Dorsolateral prefrontal cortex (tissue), 120 donors: ENCODE measurements at regions of chr1 and their contacts with region 1.

Region 1: DNA sequence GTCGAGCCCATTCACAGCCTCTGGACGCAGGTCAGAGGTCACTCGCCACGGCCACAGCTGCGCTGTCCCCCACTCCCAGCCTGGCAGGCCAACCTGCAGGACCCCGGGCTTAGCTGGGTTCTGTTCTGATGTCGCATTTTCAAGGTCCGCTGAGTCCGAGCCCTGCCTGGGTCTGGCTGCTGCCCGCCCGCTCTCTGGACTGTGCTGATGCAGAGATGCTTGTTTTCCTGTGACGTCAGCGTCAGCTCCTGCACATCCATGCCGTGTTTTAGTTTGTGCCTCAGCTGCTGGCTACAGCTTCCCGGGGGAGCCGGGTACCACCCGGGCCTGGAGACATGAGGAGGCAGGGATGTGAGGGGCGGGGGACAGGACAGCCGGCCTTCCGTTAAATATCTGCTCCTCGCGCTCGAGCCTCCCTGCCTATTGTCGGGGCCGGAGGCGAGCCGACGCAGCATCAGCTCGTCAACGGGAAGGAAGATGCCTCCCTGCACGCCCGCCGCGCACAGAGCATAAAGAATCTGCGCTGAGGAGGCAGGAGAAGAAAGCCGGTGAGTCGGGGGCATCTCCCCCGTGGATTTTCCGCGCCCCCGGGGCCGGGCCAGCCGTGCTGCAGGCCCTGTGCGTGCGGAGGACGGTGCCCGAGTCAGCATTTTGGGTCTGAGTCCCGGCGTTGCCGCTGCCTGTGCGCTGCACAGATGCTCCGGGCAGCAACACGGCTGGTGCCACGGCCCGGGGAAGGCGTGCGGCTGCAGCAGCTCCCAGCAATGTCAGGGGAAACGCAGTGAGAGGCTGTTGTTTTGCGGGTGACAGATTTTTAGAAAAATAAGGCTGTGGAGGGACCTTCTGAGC is 23.4 kb downstream of the PRKCZ start:
- DNase-seq: peak; percentile 75 to 95 (median 92)
- H3K4me3 ChIP-seq: peak overlapping the region; percentile 56 to 93 (median 81)
- H3K27ac ChIP-seq: peak overlapping the region; percentile 58 to 97 (median 91)
- H3K27me3 ChIP-seq: peaks cover 0 to 5% (median 0%) of the 10 kb centered on the region in 45 donors
- CTCF ChIP-seq: peak in 3 of 56 donors; percentile 12 to 15 (median 13)

Region 2: GRCh38 chr1:1919304-1920056 is 154.1 kb before region 1 on chr1:
- intact Hi-C with region 1: no loop called
- DNase-seq: peak; percentile 85 to 93 (median 90)
- H3K4me3 ChIP-seq: peak overlapping the region; percentile 15 to 72 (median 59)
- H3K27ac ChIP-seq: peak overlapping the region in 15 of 59 donors; percentile 10 to 73 (median 49)
- H3K27me3 ChIP-seq: no peaks in the 10 kb centered on the region
- CTCF ChIP-seq: peak in 3 of 56 donors; percentile 6 to 38 (median 12)

Region 3: DNA sequence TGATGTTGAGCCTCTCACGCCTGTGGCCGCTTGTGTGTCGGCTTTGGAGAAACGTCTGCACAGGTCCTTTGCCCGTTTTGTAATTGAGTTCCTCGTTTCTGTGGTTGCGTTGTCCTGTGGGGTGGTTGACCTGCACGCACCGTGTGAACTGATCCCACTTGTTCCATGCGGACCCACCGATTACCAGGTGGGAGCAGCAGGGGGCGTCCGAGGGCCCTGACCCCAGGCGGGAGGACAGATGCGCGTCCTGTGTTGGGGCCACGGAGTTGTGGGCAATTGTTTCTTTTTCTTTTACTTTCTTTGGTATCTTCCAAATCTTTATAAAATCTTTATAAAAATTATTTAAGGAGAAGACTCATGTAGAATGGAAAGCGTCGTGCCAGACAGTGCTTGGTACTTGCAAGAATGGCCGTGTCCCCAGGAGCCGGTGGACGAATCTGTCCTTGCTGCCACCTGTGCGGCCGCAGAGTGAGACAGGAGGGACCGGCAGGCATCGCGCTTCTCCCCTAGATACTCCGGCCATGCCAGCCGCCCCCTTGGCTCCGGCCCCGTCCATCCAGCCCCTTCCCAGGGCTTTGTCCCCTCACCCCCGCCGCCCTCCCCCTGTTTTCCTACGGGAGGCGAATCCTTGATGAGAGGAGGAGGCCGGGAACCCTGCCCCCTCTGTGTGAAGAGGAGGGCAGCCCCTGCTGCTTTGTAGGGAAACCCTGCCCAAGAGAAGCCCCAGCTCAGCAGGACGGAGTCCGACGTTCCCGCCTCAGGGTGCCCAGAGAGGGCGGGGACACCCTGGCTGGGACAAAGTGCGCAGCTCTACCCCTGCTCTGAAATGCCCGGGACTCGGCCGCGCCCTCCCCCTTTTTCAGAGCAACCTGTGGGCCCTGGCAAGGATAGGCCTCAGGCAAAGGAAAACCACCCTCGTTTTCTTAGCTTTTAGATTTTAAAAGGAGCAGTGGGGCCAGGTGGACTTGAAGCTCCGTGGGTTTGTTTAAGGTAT is 18.3 kb after region 1 on chr1:
- intact Hi-C with region 1: loop called in 1 of 2 experiments (anchors 1 kb)
- DNase-seq: peak in 8 of 10 donors; percentile 55 to 78 (median 71)
- H3K4me3 ChIP-seq: peak overlapping the region in 23 of 59 donors; percentile 4 to 40 (median 19)
- H3K27ac ChIP-seq: peak overlapping the region in 12 of 59 donors; percentile 12 to 66 (median 34)
- H3K27me3 ChIP-seq: no peaks in the 10 kb centered on the region
- CTCF ChIP-seq: peak in 55 of 56 donors; percentile 4 to 88 (median 73)